Thyroid gland (tissue), 4 donors: ENCODE measurements at regions of chr11 and their contacts with region 1.

Region 1: DNA sequence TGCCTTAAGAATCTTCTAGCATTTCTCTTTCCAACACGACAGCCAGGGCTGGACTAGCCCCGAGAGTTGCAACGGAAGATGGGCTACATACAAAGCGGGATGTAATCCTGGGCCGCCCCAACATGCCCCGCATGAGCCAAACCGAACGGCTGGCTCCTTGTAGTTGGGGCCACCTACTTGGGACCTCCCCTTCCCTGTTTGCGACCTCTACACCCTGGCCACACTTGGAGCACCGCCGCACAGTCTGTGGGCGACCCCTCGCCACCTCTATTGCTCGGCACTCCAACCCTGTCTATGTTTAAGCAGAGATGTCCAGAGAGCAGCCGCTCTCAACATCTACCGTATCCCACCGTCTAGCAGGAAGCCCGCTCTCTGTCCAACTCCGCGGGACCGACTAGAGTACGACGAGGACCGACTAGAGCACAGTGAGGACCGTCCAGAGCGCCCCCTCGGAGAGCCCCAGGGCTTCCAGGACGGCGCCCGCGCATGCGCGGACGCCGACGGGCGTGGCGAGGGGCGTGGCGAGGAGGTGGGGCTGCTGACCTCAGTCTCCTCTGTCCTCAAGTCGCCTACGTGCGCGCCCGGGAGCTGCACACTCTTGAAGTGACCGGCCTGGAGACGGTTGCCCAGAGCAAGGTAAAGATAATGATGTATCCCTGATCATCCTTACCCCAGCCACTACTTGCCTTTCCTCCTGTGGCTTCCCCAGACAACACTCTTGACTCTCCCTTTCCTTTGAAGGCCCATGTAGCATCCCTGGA is 32.3 kb downstream of the NEAT1 start:
- DNase-seq: peak; percentile 91
- H3K4me3 ChIP-seq: peak overlapping the region in 2 of 3 donors; percentile 11 to 47
- H3K27ac ChIP-seq: peak overlapping the region; percentile 86 to 95 (median 93)
- H3K4me1 ChIP-seq: peaks cover 32 to 48% of the 10 kb centered on the region in 2 donors
- H3K27me3 ChIP-seq: no peaks in the 10 kb centered on the region
- CTCF ChIP-seq: peak in 1 of 6 experiments; percentile 19
- POLR2A ChIP-seq: peak in 1 of 2 donors; percentile 96

Region 2: DNA sequence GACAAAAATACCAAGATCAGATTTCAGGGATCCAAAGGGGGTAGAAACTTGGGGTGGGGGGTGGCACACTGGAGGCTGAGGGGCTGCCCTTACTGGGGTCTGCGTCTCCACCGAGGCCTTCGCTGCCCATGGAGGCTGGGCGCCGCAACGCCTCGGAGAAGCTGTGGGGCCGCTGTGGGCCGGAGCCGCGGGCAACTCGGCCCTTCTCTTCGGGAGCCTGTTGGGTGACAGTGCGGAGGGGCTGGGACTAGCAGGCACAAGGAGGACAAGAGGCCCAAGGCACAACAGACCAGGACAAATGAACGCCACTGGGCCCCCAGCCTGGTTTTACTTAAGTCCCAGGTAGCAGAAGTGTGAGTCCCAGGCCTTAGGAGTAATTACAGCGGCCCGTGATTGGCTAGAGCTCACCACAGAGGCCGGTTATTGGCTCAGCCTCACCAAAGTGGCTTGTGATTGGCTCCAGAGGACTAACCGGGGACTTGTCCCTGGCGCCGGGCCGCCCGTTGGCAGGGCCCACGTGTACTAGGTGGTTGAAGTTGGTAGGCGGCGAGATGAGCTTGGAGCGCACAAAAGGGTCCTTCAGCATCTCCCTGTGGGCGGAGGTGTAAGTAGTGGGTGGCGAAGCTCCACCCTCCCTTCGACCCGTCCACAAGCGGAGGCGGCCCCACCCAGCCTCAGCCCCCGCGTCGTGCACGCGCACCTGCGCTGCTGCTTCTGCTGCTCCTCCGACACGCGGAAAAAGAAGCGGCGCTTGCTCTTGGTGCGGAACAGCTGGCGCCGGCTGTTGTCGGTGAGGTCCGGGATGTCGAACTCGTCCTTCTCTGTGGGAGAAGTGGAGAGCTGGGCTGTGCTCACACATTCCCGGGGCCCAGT is 628.1 kb before region 1 on chr11:
- intact Hi-C with region 1: no loop called
- DNase-seq: no peak
- H3K4me3 ChIP-seq: no peak overlapping the region
- H3K27ac ChIP-seq: no peak overlapping the region
- H3K4me1 ChIP-seq: no peaks in the 10 kb centered on the region
- H3K27me3 ChIP-seq: no peaks in the 10 kb centered on the region
- CTCF ChIP-seq: no peak
- POLR2A ChIP-seq: no peak

Region 3: DNA sequence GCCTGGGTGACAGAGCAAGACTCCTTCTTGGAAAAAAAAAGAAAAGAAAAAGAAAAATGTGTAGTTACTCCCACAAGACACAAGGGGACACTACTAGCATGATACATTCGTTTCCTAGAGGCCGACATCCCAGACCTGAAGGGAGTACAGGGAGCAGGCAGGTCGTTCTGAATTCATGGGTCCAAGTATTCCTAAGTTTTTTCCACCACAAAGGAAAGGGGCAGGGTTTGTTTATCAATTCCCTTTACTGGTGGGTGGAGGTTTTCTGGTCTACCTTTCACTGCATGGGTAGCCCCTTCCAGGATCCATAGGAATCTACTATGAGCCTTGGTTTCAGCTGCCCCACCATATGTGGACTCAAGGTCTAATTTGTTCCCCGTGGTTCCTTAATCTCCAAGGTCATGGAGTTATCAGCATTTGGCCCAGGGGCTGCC is 88.5 kb before region 1 on chr11:
- intact Hi-C with region 1: loop called (anchors 10 kb)
- DNase-seq: peak; percentile 36 to 51
- H3K4me3 ChIP-seq: no peak overlapping the region
- H3K27ac ChIP-seq: no peak overlapping the region
- H3K4me1 ChIP-seq: peaks cover 0 to 8% of the 10 kb centered on the region in 2 donors
- H3K27me3 ChIP-seq: no peaks in the 10 kb centered on the region
- CTCF ChIP-seq: peak; percentile 58 to 95 (median 80)
- POLR2A ChIP-seq: no peak